Panc1 (cell line): ENCODE measurements at regions of chr20 and their contacts with region 1.

Region 1: GRCh38 chr20:35515949-35516645 is 13.4 kb downstream of the C20orf173 start:
- DNase-seq: peak; percentile 43
- ATAC-seq: peak; percentile 91
- H3K4me3 ChIP-seq: no peak overlapping the region
- H3K27ac ChIP-seq: no peak overlapping the region
- H3K4me1 ChIP-seq: peaks cover 3% of the 10 kb centered on the region; the same call in 1 of the 2 replicates
- H3K27me3 ChIP-seq: no peaks in the 10 kb centered on the region
- CTCF ChIP-seq: no peak

Region 2: GRCh38 chr20:35303735-35304491 is 212.2 kb before region 1 on chr20:
- CTCF ChIA-PET with region 1: no interaction called
- POLR2A ChIA-PET with region 1: no interaction called
- in situ Hi-C with region 1: no loop called
- intact Hi-C with region 1: no loop called
- DNase-seq: peak; percentile 91
- ATAC-seq: peak; percentile 63
- H3K4me3 ChIP-seq: no peak overlapping the region
- H3K27ac ChIP-seq: peak overlapping the region; percentile 97
- H3K4me1 ChIP-seq: peaks cover 71% of the 10 kb centered on the region
- H3K27me3 ChIP-seq: no peaks in the 10 kb centered on the region
- CTCF ChIP-seq: peak; percentile 96

Region 3: GRCh38 chr20:35680452-35681183 is 164.5 kb after region 1 on chr20:
- CTCF ChIA-PET with region 1: no interaction called
- POLR2A ChIA-PET with region 1: interaction called, 11 read pairs
- in situ Hi-C with region 1: no loop called
- intact Hi-C with region 1: no loop called
- DNase-seq: no peak
- ATAC-seq: no peak
- H3K4me3 ChIP-seq: no peak overlapping the region
- H3K27ac ChIP-seq: no peak overlapping the region
- H3K4me1 ChIP-seq: no peaks in the 10 kb centered on the region
- H3K27me3 ChIP-seq: no peaks in the 10 kb centered on the region
- CTCF ChIP-seq: no peak